ENCODE measurements at regions of chr5 and their contacts with region 1.

Region 1: DNA sequence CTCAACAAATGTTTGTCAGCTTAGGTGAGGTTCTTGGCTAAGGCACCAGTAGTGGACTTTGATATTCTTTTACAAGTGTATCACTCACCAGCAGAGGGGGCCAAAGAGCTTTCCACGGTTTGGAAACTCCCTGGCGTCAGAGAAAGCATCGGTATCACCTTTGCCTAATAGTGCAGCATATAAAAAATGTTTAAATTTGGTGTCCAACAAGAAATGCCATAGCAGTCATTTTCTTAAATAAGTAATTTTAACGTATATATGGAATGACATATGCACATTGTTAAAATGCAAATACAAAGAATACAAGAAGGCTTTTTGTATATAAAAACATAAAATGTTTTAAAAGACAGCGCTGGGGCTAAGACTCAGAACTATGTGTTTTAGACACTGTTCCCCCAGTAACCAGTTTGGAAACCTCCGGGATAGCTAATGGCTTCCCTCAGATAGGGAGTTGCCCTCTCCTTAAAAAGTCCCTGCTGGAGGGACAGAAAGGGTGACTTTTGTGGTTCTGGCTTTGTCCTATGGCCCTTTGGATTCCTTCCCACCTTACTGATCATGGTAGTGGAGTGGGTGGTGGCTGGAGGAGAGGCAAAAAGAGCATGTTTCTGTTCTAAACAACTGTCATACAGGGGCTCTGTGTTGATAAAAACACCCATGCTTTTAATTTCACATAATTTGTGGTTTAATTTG is 124.6 kb downstream of the GPBP1 start:
- DNase-seq: peak; percentile 94
- H3K4me3 Mint-ChIP-seq: peak overlapping the region; percentile 41
- H3K27ac Mint-ChIP-seq: no peak overlapping the region
- H3K4me1 Mint-ChIP-seq: peaks cover 32% of the 10 kb centered on the region
- H3K27me3 Mint-ChIP-seq: no peaks in the 10 kb centered on the region

Region 2: GRCh38 chr5:56909294-56910209 is 388.9 kb before region 1 on chr5 and contains the start of gene SETD9:
- CTCF ChIA-PET with region 1: interaction called, 3 read pairs
- intact Hi-C with region 1: loop called (anchors 2 kb)
- DNase-seq: peak; percentile 97
- H3K4me3 Mint-ChIP-seq: peak within 1 kb of the TSS; percentile 81
- H3K27ac Mint-ChIP-seq: peak within 1 kb of the TSS; percentile 94
- H3K4me1 Mint-ChIP-seq: peaks cover 19% of the 10 kb centered on the region
- H3K27me3 Mint-ChIP-seq: no peaks in the 10 kb centered on the region
- total RNA-seq, gene SETD9: 5.8 to 8.6 TPM

Region 3: DNA sequence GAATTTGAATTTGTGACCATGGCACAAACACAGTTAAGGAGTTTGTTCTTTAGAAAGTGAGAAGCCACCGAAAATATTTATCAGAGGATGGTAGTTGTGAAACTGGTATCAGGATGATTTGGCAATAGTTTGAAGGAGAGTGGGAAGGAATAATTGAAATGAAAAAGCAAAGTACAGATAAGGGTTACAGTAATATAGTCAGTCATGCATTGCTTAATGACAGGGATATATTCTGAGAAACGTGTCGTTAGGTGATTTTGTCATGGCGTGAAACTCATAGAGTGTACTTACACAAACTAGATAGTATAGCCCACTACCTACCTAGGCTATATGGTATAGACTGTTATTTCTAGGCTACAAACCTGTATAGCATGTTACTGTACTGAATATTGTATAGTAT is 40.4 kb before region 1 on chr5:
- CTCF ChIA-PET with region 1: no interaction called
- intact Hi-C with region 1: no loop called
- DNase-seq: no peak
- H3K4me3 Mint-ChIP-seq: no peak overlapping the region
- H3K27ac Mint-ChIP-seq: no peak overlapping the region
- H3K4me1 Mint-ChIP-seq: peaks cover 42% of the 10 kb centered on the region
- H3K27me3 Mint-ChIP-seq: no peaks in the 10 kb centered on the region

Region 4: GRCh38 chr5:57338068-57338892 is 39.8 kb after region 1 on chr5:
- CTCF ChIA-PET with region 1: interaction called, 3 read pairs
- intact Hi-C with region 1: loop called (anchors 1 kb)
- DNase-seq: peak; percentile 31
- H3K4me3 Mint-ChIP-seq: no peak overlapping the region
- H3K27ac Mint-ChIP-seq: no peak overlapping the region
- H3K4me1 Mint-ChIP-seq: no peaks in the 10 kb centered on the region
- H3K27me3 Mint-ChIP-seq: peaks cover under 1% of the 10 kb centered on the region

Region 5: DNA sequence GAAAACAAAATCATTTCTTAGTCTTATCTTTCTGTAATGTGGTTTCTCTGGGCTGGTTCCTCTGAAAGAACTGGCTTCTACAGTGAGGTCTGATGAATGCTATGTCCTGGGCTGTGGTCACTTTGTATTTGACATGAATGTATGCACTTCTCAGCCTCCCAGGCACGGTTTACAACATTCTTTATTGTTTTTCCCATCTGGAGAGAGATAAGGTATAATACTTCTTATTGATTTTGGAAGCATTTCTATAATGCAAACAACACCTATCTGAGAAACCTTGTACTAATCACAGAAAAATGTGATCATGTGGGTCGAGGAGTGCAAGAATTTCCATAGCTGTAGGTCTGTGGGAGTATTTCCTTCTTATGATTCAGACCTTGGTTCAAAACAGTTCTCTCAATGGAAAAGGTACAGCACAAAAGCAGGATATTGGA is 137.3 kb after region 1 on chr5:
- CTCF ChIA-PET with region 1: no interaction called
- intact Hi-C with region 1: loop called (anchors 2 kb)
- DNase-seq: no peak
- H3K4me3 Mint-ChIP-seq: no peak overlapping the region
- H3K27ac Mint-ChIP-seq: no peak overlapping the region
- H3K4me1 Mint-ChIP-seq: no peaks in the 10 kb centered on the region
- H3K27me3 Mint-ChIP-seq: peaks cover 2% of the 10 kb centered on the region

Region 6: DNA sequence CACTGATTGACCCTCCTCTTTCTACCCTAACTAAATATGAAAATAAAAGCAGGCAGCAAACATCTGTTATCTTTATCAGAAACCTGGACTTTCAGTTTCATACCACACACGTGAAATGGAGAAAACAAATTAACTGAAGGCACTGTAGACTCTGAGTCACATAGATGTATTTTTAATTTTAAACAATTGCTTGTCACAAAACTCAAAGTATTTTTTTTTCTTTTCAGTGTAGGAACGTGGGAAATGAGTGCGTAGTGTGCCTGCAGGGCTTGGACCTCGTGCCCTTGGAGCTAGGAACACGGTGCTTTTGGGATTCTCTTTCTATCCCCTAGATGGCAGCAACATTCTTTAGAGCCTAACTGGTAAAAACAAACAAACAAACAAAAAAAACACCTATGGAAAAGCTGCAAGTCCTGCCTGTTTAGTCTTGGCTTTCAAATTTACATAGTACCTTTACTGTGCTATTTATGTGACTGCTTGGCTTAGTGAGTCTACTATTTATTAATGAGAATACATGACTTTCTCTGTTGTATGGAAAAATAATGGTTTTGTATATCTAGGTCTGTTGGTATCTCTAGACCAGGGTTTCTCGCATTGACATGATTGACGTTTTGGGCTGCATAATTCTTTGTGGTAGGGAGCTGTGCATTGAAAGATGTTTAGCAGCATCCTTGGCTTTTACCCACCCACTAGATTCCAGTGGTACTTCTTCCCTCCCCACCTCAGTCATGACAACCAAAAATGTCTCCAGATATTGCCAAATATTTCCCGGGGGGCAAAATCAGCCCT is 201.0 kb after region 1 on chr5:
- CTCF ChIA-PET with region 1: interaction called, 7 read pairs
- intact Hi-C with region 1: loop called (anchors 1 kb)
- DNase-seq: peak; percentile 31
- H3K4me3 Mint-ChIP-seq: peak overlapping the region; percentile 51
- H3K27ac Mint-ChIP-seq: no peak overlapping the region
- H3K4me1 Mint-ChIP-seq: peaks cover 19% of the 10 kb centered on the region
- H3K27me3 Mint-ChIP-seq: no peaks in the 10 kb centered on the region

Region 7: DNA sequence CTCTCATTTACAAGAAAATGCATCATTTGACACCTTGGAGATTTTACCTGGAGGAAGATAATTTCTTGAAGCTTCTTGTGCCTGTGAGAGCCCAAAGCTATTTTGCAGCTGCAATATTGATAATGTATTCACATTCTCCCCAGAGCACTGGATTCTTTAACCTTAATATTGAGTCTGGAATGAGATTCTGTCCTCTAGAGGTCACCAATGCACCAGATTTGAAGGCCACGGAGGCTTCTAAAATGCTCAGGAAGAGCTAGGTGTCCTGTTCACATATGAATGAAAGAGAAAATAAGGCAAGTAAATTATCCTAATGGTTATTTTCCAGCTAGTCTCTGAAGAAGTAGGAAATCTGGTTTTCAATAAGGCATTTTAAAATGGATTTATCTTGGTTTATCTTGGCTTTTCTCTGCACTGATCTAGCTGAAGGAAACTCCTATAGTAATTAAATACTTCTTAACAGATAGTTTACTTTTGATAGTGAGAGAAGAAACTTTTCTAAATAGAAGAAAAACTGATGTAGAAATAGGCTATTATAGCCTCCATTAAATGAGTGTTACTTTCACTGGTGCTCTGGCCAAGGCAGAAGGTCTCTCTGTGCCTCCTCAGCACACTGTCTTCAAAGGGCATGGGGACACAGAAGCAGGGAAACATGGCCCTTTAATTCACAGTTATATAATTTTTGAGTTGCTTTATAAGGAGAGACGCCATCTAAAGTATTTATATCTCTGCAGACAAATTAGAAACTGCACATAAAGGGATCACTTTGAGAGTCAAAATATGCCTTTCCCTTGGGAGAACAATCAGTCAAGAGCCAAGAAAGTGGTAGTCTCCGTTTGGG is 481.2 kb after region 1 on chr5:
- CTCF ChIA-PET with region 1: interaction called, 5 read pairs
- intact Hi-C with region 1: loop called (anchors 2 kb)
- DNase-seq: peak; percentile 52
- H3K4me3 Mint-ChIP-seq: no peak overlapping the region
- H3K27ac Mint-ChIP-seq: no peak overlapping the region
- H3K4me1 Mint-ChIP-seq: no peaks in the 10 kb centered on the region
- H3K27me3 Mint-ChIP-seq: peaks cover 6% of the 10 kb centered on the region

Measured in activated naive CD4-positive, alpha-beta T cell treated with anti-CD3 and anti-CD28 coated beads for 36 hours (primary cell).